ENCODE measurements at regions of chr17 and their contacts with region 1.

Region 1: DNA sequence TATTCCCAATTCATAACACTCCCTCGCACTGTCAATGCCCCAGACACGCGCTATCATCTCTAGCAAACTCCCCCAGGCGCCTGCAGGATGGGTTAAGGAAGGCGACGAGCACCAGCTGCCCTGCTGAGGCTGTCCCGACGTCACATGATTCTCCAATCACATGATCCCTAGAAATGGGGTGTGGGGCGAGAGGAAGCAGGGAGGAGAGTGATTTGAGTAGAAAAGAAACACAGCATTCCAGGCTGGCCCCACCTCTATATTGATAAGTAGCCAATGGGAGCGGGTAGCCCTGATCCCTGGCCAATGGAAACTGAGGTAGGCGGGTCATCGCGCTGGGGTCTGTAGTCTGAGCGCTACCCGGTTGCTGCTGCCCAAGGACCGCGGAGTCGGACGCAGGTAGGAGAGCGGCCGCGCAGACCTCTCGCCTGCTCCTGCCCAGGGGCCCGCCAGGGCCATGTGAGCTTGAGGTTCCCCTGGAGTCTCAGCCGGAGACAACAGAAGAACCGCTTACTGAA is at the start of gene GRN:
- H3K4me3 ChIP-seq: peak within 1 kb of the TSS; percentile 82
- H3K27ac ChIP-seq: peak within 1 kb of the TSS; percentile 40; the same call in 1 of the 2 replicates
- H3K4me1 ChIP-seq: no peaks in the 10 kb centered on the region
- CTCF ChIP-seq: no peak

Region 2: GRCh38 chr17:44186307-44187130 is 158.5 kb before region 1 on chr17 and contains the start of gene TMUB2:
- CTCF ChIA-PET with region 1: interaction called, 5 read pairs
- POLR2A ChIA-PET with region 1: interaction called, 11 read pairs
- H3K4me3 ChIP-seq: peak within 1 kb of the TSS; percentile 77
- H3K27ac ChIP-seq: peak within 1 kb of the TSS; percentile 91
- H3K4me1 ChIP-seq: peaks cover 3% of the 10 kb centered on the region
- CTCF ChIP-seq: no peak

Region 3: GRCh38 chr17:44356241-44356640 is 11.2 kb after region 1 on chr17:
- CTCF ChIA-PET with region 1: interaction called, 21 read pairs
- POLR2A ChIA-PET with region 1: interaction called, 23 read pairs
- H3K4me3 ChIP-seq: no peak overlapping the region
- H3K27ac ChIP-seq: no peak overlapping the region
- H3K4me1 ChIP-seq: peaks cover 6% of the 10 kb centered on the region
- CTCF ChIP-seq: no peak

Region 4: GRCh38 chr17:44473367-44473766 is 128.4 kb after region 1 on chr17:
- CTCF ChIA-PET with region 1: no interaction called
- POLR2A ChIA-PET with region 1: no interaction called
- H3K4me3 ChIP-seq: no peak overlapping the region
- H3K27ac ChIP-seq: no peak overlapping the region
- H3K4me1 ChIP-seq: peaks cover 5% of the 10 kb centered on the region
- CTCF ChIP-seq: no peak

Measured in HEK293 (cell line).